Activated T-helper 2 cell treated with anti-CD3 and anti-CD28 coated beads, Interferon-gamma antibody, Interleukin-2, Interleukin-4, amounts not matched to agents 10 μg/mL and 5 μg/mL and 100 μg/mL, durations not matched to agents 14 hours and 24 hours and 36 hours (primary cell): ENCODE measurements at regions of chr5 and their contacts with region 1.

Region 1: DNA sequence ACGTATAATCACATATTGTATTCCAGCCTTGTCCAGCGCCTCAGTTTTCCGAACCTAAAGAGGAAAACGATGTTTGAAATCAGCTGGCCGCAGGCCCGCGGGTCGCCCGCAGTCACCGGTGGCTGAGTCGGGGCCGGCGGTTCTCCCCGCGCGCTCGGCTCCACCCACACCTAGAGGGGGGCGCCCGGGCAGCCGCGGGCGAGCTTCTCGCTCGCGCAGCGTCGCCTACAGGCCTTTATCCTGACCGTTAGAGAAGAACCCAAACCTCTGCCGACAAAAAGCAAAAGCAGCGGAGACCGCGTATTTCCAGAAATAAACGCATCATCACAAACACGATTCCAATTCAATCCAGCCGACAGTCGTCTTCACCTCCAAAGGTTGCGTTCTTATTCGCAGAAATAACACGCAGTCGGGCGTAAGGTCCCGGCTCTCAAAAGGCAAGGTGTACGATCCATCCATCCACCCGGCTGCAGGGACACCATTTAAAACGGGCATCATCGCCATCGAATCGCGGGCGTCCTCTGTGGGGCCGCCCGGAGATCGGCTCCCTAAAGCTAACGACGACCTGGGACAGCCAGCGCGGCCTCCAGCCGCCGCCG is 680 bp upstream of the NIPBL start:
- DNase-seq: peak; percentile 72
- H3K4me3 Mint-ChIP-seq: peak overlapping the region; percentile 87
- H3K27ac Mint-ChIP-seq: peak overlapping the region; percentile 97
- H3K4me1 Mint-ChIP-seq: peaks cover 36% of the 10 kb centered on the region
- H3K27me3 Mint-ChIP-seq: no peaks in the 10 kb centered on the region

Region 2: GRCh38 chr5:36151434-36152323 is 724.2 kb before region 1 on chr5 and contains the starts of genes LMBRD2 and SKP2:
- intact Hi-C with region 1: loop called (anchors 2 kb)
- DNase-seq: peak; percentile 97
- H3K4me3 Mint-ChIP-seq: peak within 1 kb of the TSS; percentile 95
- H3K27ac Mint-ChIP-seq: peak within 1 kb of the TSS; percentile 88
- H3K4me1 Mint-ChIP-seq: peaks cover 44% of the 10 kb centered on the region
- H3K27me3 Mint-ChIP-seq: no peaks in the 10 kb centered on the region
- total RNA-seq, gene LMBRD2: 9.3 and 11.6 TPM in 2 replicates
- total RNA-seq, gene SKP2: 56.6 and 58.9 TPM in 2 replicates

Region 3: DNA sequence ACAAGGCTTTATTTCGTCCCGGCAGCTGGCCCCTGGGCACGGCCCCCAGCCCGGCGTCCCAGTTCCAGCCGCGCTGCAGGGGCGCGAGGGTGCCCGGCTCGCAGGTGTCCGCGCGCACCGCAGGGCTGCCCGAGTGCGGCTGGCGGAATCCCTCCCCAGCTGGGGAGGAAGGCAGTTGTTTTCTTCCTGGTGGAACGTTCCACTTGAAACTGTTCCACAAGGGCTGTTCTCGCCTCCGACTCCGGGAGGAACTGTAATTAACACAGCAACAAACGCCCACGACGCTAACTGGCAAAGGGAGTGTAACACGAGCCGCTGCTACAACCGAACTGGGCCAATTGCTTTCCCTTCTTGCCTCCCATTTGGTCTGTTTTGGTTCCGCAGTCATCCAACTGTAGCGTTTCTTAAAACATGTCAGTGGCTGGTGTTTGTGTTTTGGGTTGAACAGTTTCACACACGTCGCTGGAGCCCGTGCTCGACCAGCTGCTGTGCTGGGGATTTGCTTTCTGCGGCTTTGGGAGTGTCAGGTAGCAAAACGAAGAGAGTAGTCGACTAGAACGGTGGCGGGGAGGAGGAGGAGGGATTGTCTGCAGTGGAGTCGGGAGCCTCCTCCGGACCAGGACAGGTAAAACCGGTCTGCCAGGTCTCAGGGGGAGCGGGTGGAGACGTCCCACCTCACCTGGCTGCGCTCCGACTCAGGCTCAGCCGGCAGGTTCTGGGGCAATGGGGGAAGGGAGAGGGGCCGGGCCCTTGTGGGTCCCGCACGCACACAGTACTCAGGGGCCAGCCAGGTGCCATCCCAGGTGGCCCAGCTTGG is 130.9 kb before region 1 on chr5:
- intact Hi-C with region 1: loop called (anchors 1 kb)
- DNase-seq: no peak
- H3K4me3 Mint-ChIP-seq: peak overlapping the region; percentile 76
- H3K27ac Mint-ChIP-seq: no peak overlapping the region
- H3K4me1 Mint-ChIP-seq: peaks cover 13% of the 10 kb centered on the region
- H3K27me3 Mint-ChIP-seq: peaks cover 46% of the 10 kb centered on the region

Region 4: DNA sequence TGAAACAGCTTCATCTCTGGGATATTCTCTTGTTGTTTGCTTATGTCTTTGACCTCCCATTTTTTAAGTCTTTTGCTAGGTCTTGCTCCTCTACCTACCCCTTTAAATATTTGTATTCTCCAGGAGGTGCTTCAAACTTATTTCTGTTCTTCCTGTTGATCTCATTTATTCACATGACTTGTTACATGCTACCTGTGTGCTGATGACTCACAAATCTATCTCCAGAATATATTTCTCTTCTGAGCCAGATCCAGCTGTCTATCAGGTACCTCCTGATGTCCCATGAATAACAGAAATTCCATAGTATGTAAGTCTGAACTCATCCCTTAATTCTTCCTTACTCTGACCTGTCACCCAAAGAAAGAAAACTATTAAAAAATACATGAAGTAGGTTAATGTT is 11.6 kb after region 1 on chr5:
- intact Hi-C with region 1: no loop called
- DNase-seq: no peak
- H3K4me3 Mint-ChIP-seq: no peak overlapping the region
- H3K27ac Mint-ChIP-seq: no peak overlapping the region
- H3K4me1 Mint-ChIP-seq: peaks cover 44% of the 10 kb centered on the region
- H3K27me3 Mint-ChIP-seq: no peaks in the 10 kb centered on the region

Region 5: GRCh38 chr5:36998578-36998977 is 122.7 kb after region 1 on chr5:
- intact Hi-C with region 1: loop called (anchors 5 kb)
- DNase-seq: no peak
- H3K4me3 Mint-ChIP-seq: no peak overlapping the region
- H3K27ac Mint-ChIP-seq: no peak overlapping the region
- H3K4me1 Mint-ChIP-seq: no peaks in the 10 kb centered on the region
- H3K27me3 Mint-ChIP-seq: no peaks in the 10 kb centered on the region

Region 6: DNA sequence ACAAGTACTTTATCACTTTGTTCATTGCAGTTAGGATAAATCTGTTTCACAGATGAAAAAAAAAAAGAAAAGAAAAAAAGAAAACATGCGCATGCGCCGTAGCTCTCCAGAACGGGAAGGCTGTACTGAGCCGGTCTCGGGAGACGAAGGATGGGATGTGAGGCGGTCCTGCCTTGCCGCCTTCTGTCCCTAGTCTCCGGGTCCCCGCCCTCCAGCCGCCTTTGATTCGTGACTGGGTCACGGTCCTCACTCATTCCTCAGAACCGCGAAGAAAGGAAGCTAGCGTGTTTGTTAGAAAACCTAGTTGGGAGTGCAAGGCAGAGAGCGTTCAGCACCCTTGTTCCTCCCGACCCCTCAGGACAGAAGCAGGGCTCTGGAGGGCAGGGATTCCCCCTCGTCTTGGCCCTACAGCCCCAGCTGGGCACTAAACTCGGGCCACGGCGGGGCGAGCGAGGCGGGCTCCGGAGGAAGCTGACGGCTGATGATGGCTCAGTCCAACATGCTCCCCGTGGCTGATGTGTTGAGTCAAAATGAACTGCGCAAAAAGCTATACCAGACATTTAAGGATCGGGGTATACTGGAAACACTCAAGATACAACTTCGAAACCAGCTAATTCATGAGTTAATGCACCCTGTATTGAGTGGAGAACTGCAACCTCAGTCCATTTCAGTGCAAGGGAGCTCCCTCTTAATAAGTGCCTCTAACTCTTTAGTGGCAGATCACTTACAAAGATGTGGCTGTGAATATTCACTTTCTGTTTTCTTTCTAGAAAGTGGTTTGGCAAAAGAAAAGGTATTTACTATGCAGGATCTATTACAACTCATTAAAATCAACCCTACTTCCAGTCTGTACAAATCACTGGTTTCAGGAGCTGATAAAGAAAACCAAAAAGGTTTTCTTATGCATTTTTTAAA is 333.3 kb after region 1 on chr5:
- intact Hi-C with region 1: loop called (anchors 10 kb)
- DNase-seq: no peak
- H3K4me3 Mint-ChIP-seq: peak overlapping the region; percentile 80
- H3K27ac Mint-ChIP-seq: peak overlapping the region; percentile 31
- H3K4me1 Mint-ChIP-seq: peaks cover 19% of the 10 kb centered on the region
- H3K27me3 Mint-ChIP-seq: peaks cover 3% of the 10 kb centered on the region

Region 7: DNA sequence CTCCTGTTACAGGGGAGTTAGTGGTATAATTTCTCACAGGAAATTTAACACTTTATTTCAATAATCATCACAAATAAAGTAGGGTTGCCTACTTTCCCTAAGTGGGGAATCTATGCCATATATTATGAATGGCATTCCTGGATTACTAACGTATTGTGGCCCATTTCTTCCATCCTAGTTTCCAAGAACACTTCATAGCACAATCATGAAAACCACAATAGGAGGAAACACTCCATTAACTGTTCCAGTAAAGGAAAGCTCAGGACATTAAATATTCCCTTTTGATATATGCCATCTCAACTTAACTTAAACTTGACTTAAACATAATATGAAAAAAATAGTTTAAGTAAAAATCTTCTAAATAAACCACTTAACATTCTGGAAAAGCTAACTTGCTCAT is 371.1 kb after region 1 on chr5:
- intact Hi-C with region 1: no loop called
- DNase-seq: no peak
- H3K4me3 Mint-ChIP-seq: no peak overlapping the region
- H3K27ac Mint-ChIP-seq: no peak overlapping the region
- H3K4me1 Mint-ChIP-seq: peaks cover 6% of the 10 kb centered on the region
- H3K27me3 Mint-ChIP-seq: no peaks in the 10 kb centered on the region

Region 8: DNA sequence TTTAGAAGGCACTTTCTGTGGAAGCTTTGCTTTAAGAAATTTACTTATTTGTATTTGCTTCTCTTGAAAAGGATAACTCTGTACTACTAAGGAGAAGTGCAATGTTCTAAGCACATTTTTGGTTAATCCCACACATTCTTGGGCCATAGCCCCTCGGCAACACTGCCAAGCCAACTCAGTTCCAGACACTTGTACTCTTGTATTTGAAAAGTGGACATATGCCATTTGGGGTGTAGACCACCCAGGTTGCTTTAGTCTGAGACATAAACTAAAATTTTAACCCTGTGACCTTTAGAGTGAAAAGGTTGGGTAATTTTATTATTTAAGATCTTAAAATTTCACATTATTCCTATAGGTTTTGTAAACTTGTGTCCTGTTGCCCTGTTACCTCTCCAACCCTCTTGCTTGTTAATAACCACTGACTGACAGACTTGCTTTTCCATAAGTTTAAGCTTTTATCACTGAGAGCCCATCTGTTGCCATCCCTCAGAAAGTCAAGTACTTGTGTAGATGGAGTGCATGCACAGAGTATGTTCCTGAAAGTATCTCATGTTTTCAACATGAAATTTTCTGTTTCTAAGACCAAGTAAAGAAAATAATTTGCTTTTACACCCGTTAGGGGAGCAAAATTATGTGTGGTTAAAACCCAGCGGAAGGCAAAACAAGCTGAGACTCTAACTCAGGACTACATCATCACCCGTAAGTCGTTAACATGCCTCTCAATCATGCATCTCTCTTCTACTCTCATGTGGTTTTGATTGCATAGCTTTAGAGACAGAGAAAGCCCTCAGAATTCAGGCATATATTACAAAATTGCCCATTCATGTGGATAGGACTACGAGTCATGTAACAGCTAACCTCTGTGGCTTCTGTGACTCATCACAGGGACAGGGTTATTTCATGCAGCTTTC is 846.6 kb after region 1 on chr5:
- intact Hi-C with region 1: loop called (anchors 5 kb)
- DNase-seq: peak; percentile 31
- H3K4me3 Mint-ChIP-seq: peak overlapping the region; percentile 56
- H3K27ac Mint-ChIP-seq: peak overlapping the region; percentile 84
- H3K4me1 Mint-ChIP-seq: peaks cover 49% of the 10 kb centered on the region
- H3K27me3 Mint-ChIP-seq: no peaks in the 10 kb centered on the region